ENCODE measurements at regions of chr16 and their contacts with region 1.

Region 1: DNA sequence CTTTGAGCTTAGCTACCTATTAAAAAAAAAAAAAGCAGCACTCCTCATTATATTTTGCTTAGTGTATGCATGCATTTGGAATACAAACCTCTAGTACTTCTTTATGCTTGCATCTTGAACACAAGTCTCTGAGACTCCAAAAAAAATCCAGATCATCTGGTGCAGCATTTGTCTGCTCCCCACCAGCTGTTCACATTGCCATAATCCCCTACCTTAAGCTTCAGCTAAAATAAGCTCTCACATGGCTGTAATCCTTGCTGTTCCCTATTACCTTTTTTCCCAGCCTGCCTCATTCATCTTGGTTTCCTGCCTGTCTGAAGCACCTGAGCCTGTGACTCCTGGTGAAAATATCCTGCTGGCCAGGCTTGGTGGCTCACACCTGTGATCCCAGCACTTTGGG is 7.5 kb upstream of the NFATC2IP start:
- DNase-seq: no peak
- ATAC-seq: no peak
- H3K4me3 ChIP-seq: no peak overlapping the region
- H3K27ac ChIP-seq: no peak overlapping the region
- H3K4me1 ChIP-seq: peaks cover 10% of the 10 kb centered on the region
- H3K27me3 ChIP-seq: no peaks in the 10 kb centered on the region
- CTCF ChIP-seq: no peak
- EP300 ChIP-seq: no peak
- POLR2A ChIP-seq: no peak
- RAD21 ChIP-seq: no peak

Region 2: GRCh38 chr16:28846080-28846932 is 97.0 kb before region 1 on chr16 and contains the start of gene TUFM:
- CTCF ChIA-PET with region 1: interaction called, 17 read pairs
- POLR2A ChIA-PET with region 1: interaction called, 4 read pairs
- RAD21 ChIA-PET with region 1: interaction called, 22 read pairs
- SMC1A ChIA-PET with region 1: interaction called, 27 read pairs
- in situ Hi-C with region 1: no loop called
- intact Hi-C with region 1: no loop called
- DNase-seq: peak; percentile 92
- ATAC-seq: peak; percentile 95
- H3K4me3 ChIP-seq: peak within 1 kb of the TSS; percentile 96
- H3K27ac ChIP-seq: peak within 1 kb of the TSS; percentile 81
- H3K4me1 ChIP-seq: peaks cover 9% of the 10 kb centered on the region
- H3K27me3 ChIP-seq: no peaks in the 10 kb centered on the region
- CTCF ChIP-seq: peak; percentile 75 to 97 (median 79); a peak in 5 of 6 replicates
- EP300 ChIP-seq: 0 out of 4 replicates have a peak, but pooled peaks of 1 of the 2 experiments have one; percentile 26
- POLR2A ChIP-seq: peak; percentile 93
- RAD21 ChIP-seq: 0 out of 2 replicates have a peak, but pooled peaks have one; percentile 30
- polyA plus RNA-seq, gene TUFM: 23.4 to 101 TPM

Region 3: DNA sequence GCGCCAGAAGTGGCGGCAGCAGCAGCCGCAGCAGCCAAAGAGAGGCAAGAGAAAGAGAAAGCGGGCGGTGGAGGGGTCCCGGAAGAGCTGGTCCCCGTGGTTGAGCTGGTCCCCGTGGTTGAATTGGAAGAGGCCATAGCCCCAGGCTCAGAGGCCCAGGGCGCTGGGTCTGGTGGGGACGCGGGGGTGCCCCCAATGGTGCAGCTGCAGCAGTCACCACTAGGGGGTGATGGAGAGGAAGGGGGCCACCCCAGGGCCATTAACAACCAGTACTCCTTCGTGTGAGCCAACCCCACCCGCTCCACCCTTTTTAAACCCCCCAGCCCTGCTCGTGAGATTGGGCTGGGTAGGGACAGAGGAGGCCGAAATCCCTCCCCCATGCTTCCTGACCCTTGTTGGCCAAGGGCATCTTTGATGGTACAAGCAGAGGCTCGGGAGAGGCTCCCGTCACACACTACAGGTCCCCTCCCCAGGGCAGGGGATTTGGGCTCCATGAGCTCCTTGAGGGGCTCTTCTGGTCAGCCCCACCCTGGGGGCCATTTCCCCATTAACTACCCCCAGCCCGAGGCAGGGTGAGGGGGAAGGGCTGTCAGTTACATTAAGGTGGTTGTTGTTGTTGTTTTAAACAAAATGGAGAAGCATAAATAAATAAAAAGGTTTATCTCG is 69.6 kb before region 1 on chr16:
- CTCF ChIA-PET with region 1: interaction called, 124 read pairs
- POLR2A ChIA-PET with region 1: interaction called, 3 read pairs
- RAD21 ChIA-PET with region 1: interaction called, 53 read pairs
- SMC1A ChIA-PET with region 1: interaction called, 38 read pairs
- in situ Hi-C with region 1: no loop called
- intact Hi-C with region 1: loop called (anchors 1 kb)
- DNase-seq: no peak
- ATAC-seq: peak; percentile 87
- H3K4me3 ChIP-seq: no peak overlapping the region
- H3K27ac ChIP-seq: no peak overlapping the region
- H3K4me1 ChIP-seq: peaks cover 7% of the 10 kb centered on the region; the same call in 1 of the 2 replicates
- H3K27me3 ChIP-seq: no peaks in the 10 kb centered on the region
- CTCF ChIP-seq: peak; percentile 62 to 86 (median 69)
- EP300 ChIP-seq: no peak
- POLR2A ChIP-seq: no peak
- RAD21 ChIP-seq: peak; percentile 54

Region 4: DNA sequence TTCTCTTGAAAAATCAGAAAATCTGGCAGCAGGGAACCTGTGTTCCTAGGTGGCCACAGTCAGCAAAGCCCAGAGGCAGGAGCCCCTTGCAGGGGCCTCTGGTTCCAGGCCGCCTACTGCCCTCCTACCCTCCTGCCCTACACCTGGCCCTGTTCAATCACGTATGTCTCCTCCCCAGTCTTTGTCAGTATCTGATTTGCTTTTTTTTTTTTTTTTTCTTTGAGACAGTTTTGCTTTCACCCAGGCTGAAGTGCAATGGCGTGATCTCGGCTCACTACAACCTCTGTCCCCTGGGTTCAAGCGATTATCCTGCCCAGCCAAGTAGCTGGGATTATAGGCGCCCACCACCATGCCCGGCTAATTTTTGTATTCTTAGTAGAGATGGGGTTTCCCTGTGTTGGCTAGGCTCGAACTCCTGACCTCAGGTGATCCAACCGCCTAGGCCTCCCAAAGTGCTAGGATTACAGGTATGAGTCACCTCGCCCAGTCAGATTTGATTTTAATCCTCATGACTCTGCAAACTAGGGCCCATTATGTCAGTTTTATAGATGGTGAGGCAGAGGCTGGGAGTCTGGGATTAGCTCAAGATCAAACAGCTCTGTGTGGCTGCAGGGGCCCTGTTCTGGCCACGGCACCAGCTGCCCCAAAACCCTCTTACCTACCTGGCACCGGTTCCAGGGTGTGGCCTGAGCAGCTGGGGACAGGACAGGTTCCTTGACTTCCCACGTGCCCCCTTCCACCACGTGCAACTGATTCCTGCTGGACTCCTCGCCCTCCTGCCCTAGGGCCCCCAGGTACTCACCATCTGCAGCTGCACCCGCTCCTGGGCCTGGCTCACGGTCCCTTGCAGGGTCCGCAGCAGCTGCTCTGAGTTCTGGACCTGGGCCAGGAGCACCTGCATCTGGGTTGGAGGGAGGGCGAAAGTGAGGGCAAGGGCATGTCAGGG is 32.9 kb before region 1 on chr16:
- CTCF ChIA-PET with region 1: interaction called, 11 read pairs
- POLR2A ChIA-PET with region 1: interaction called, 5 read pairs
- RAD21 ChIA-PET with region 1: interaction called, 4 read pairs
- SMC1A ChIA-PET with region 1: interaction called, 3 read pairs
- in situ Hi-C with region 1: no loop called
- intact Hi-C with region 1: no loop called
- DNase-seq: no peak
- ATAC-seq: peak; percentile 77
- H3K4me3 ChIP-seq: no peak overlapping the region
- H3K27ac ChIP-seq: peak overlapping the region; percentile 50
- H3K4me1 ChIP-seq: peaks cover 8% of the 10 kb centered on the region
- H3K27me3 ChIP-seq: no peaks in the 10 kb centered on the region
- CTCF ChIP-seq: no peak
- EP300 ChIP-seq: no peak
- POLR2A ChIP-seq: no peak
- RAD21 ChIP-seq: no peak

Region 5: DNA sequence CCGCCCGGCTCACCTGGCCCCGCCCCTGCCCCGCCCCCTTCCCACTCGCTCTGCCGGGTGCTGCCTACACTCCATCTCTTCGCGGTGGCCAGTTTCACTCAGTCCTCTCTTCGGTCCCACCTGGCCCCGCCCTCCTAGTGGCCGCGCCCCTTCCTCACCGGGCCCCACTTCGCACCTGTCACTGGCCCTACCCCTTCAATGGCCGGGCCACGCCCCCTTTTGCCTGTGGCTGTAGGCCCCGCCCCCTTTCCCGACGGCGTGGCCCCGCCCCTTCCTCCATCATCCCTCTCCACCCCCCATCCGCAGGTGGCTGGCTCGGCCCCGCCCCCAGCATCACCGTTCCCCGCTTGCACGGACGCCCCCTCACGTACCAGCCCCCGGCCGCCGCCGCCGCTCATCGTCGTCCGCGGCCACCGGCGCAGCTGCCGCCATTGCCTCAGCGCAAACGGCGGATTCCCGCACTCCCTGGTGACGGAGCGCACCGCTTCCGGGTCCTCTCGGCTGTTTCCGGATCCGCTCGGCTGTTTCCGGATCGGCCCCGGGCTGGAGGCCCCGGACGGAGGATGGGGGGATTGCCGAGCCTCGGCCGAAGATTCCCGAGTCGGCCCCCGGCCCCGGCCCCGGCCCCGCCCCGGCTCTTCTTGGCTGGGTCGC is 18.4 kb before region 1 on chr16 and contains the start of gene RABEP2:
- CTCF ChIA-PET with region 1: interaction called, 136 read pairs
- POLR2A ChIA-PET with region 1: interaction called, 21 read pairs
- RAD21 ChIA-PET with region 1: interaction called, 46 read pairs
- SMC1A ChIA-PET with region 1: interaction called, 58 read pairs
- in situ Hi-C with region 1: no loop called
- intact Hi-C with region 1: loop called (anchors 2 kb)
- DNase-seq: no peak
- ATAC-seq: peak; percentile 83
- H3K4me3 ChIP-seq: peak within 1 kb of the TSS; percentile 92
- H3K27ac ChIP-seq: peak within 1 kb of the TSS; percentile 99
- H3K4me1 ChIP-seq: peaks cover 14% of the 10 kb centered on the region
- H3K27me3 ChIP-seq: no peaks in the 10 kb centered on the region
- CTCF ChIP-seq: no peak
- EP300 ChIP-seq: no peak
- POLR2A ChIP-seq: peak; percentile 70
- RAD21 ChIP-seq: no peak
- polyA plus RNA-seq, gene RABEP2: 0.47 to 0.69 TPM

Region 6: GRCh38 chr16:28974437-28975157 is 31.3 kb after region 1 on chr16 and contains the start of gene SPNS1:
- CTCF ChIA-PET with region 1: interaction called, 26 read pairs
- POLR2A ChIA-PET with region 1: no interaction called
- RAD21 ChIA-PET with region 1: interaction called, 6 read pairs
- SMC1A ChIA-PET with region 1: no interaction called
- in situ Hi-C with region 1: no loop called
- intact Hi-C with region 1: no loop called
- DNase-seq: peak; percentile 74
- ATAC-seq: peak; percentile 97
- H3K4me3 ChIP-seq: peak within 1 kb of the TSS; percentile 92
- H3K27ac ChIP-seq: peak within 1 kb of the TSS; percentile 58
- H3K4me1 ChIP-seq: peaks cover 4% of the 10 kb centered on the region
- H3K27me3 ChIP-seq: no peaks in the 10 kb centered on the region
- CTCF ChIP-seq: no peak
- EP300 ChIP-seq: peak; percentile 52 to 61; a peak in 1 of 4 replicates
- POLR2A ChIP-seq: peak; percentile 92
- RAD21 ChIP-seq: no peak
- polyA plus RNA-seq, gene SPNS1: 0.16 to 2.3 TPM

Measured in GM12878 (cell line).